IMR-90 (cell line): ENCODE measurements at regions of chr10 and their contacts with region 1.

Region 1: GRCh38 chr10:72133517-72133916 is 45.2 kb upstream of the SPOCK2 start:
- DNase-seq: peak; percentile 83
- ATAC-seq: peak; percentile 82
- H3K4me3 ChIP-seq: no peak overlapping the region
- H3K27ac ChIP-seq: no peak overlapping the region
- H3K4me1 ChIP-seq: peaks cover 6% of the 10 kb centered on the region
- H3K27me3 ChIP-seq: no peaks in the 10 kb centered on the region
- CTCF ChIP-seq: no peak
- POLR2A ChIP-seq: no peak
- RAD21 ChIP-seq: no peak

Region 2: DNA sequence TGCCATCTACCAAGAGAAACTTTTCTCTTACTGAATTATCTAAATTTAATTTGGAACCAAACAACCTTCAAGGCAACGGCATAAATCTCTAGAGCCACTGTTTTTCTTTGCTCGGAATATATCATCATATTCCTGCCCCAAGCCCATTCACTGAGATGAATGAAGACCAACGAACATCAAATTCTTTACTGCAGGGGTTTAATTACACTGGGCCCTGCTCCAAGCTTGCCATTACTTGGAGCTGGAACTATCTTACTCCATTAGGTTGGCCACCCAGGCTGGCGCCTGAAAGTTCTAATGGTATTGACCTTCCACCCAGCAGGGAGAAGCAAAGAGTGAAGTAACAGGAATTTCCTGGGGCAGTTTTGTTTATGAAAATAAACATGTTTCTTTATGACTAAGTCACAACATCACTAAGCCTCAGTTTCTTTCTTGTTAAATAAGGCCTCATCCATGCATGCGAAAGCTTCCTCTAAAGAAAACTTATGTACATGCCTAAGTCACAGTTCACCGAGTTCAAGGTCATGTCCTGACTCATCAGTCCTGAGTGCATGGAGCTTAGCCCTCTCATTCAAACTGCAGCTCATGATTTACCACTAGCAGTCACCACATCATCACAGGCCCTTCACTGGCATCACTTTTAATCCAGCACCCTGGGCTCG is 40.2 kb after region 1 on chr10:
- CTCF ChIA-PET with region 1: no interaction called
- POLR2A ChIA-PET with region 1: no interaction called
- dilution Hi-C with region 1: no loop called
- in situ Hi-C with region 1: no loop called
- intact Hi-C with region 1: loop called (anchors 5 kb)
- DNase-seq: peak; percentile 13
- ATAC-seq: peak; percentile 55
- H3K4me3 ChIP-seq: no peak overlapping the region
- H3K27ac ChIP-seq: no peak overlapping the region
- H3K4me1 ChIP-seq: peaks cover 9% of the 10 kb centered on the region
- H3K27me3 ChIP-seq: no peaks in the 10 kb centered on the region
- CTCF ChIP-seq: no peak
- POLR2A ChIP-seq: no peak
- RAD21 ChIP-seq: no peak

Region 3: GRCh38 chr10:72215652-72216549 is 82.4 kb after region 1 on chr10 and contains the starts of genes ANAPC16 and ASCC1:
- CTCF ChIA-PET with region 1: no interaction called
- POLR2A ChIA-PET with region 1: interaction called, 4 read pairs
- dilution Hi-C with region 1: no loop called
- in situ Hi-C with region 1: no loop called
- intact Hi-C with region 1: loop called (anchors 5 kb)
- DNase-seq: peak; percentile 89
- ATAC-seq: peak; percentile 99
- H3K4me3 ChIP-seq: peak within 1 kb of the TSS; percentile 70
- H3K27ac ChIP-seq: peak within 1 kb of the TSS; percentile 95
- H3K4me1 ChIP-seq: peaks cover 4% of the 10 kb centered on the region; the same call in 1 of the 2 replicates
- H3K27me3 ChIP-seq: no peaks in the 10 kb centered on the region
- CTCF ChIP-seq: 0 out of 2 replicates have a peak, but pooled peaks have one; percentile 2
- POLR2A ChIP-seq: peak; percentile 80
- RAD21 ChIP-seq: no peak
- total RNA-seq, gene ANAPC16: 26.3 and 35.3 TPM in 2 replicates
- total RNA-seq, gene ASCC1: 21.0 and 21.9 TPM in 2 replicates